Naive thymus-derived CD4-positive, alpha-beta T cell (primary cell): ENCODE measurements at regions of chr2 and their contacts with region 1.

Region 1: GRCh38 chr2:216183462-216183861 is 74.3 kb downstream of the XRCC5 start:
- DNase-seq: no peak
- ATAC-seq: peak; percentile 50
- H3K4me3 ChIP-seq: no peak overlapping the region
- H3K4me3 Mint-ChIP-seq: peak overlapping the region in 3 of 10 donors; percentile 14 to 66 (median 27)
- H3K27ac ChIP-seq: peak overlapping the region; percentile 49
- H3K27ac Mint-ChIP-seq: peak overlapping the region in 8 of 9 donors; percentile 22 to 86 (median 70)
- H3K4me1 ChIP-seq: peaks cover 0 to 6% of the 10 kb centered on the region in 2 donors
- H3K4me1 Mint-ChIP-seq: peaks cover 66 to 93% (median 85%) of the 10 kb centered on the region in 7 donors
- H3K27me3 ChIP-seq: no peaks in the 10 kb centered on the region
- H3K27me3 Mint-ChIP-seq: no peaks in the 10 kb centered on the region

Region 2: DNA sequence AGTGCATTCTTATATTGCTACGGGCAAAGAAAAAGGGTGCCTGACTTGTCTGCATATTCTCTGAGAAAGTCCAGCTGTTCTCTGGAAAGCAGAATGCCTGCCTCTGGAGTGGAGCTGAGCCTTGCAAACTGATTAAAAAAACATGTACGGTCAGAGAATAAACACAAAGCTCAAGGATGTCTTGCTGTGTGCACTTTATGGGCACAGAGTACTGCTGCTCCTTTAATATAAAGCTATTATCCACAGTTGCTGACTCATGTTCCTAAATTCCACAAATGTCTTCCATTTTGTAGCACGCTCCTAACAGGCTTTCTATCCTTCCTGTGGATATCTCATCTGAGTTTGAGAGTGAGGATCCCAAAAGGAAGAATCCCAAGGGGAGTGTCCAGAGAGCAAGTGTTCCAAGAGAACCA is 399.1 kb before region 1 on chr2:
- CTCF ChIA-PET with region 1: no interaction called
- POLR2A ChIA-PET with region 1: no interaction called
- intact Hi-C with region 1: no loop called
- DNase-seq: no peak
- ATAC-seq: no peak
- H3K4me3 ChIP-seq: no peak overlapping the region
- H3K4me3 Mint-ChIP-seq: no peak overlapping the region
- H3K27ac ChIP-seq: no peak overlapping the region
- H3K27ac Mint-ChIP-seq: no peak overlapping the region
- H3K4me1 ChIP-seq: no peaks in the 10 kb centered on the region
- H3K4me1 Mint-ChIP-seq: no peaks in the 10 kb centered on the region
- H3K27me3 ChIP-seq: no peaks in the 10 kb centered on the region
- H3K27me3 Mint-ChIP-seq: peaks cover 0 to 10% (median 5%) of the 10 kb centered on the region in 5 donors

Region 3: DNA sequence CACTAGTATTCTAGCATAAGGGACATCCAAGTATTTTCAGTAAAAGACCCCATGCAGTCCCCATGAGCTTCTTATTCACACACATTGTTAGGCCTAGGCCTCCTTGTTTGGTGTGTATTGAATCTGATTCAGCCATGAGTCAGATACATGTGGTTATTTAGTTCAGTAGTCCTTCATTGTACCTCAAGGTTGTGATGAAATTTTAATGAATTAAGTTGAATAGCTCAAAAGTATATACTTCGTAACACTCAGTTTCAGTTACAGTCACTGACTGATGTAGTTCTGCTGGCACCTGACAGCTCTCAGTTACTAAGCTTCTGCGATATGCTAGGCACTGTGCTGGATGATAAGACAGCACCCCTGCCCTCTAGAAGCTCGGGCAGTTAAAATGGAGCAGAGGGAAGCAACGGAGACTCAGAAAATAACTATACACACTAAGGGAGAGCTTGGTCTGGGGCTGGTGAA is 12.1 kb after region 1 on chr2:
- CTCF ChIA-PET with region 1: no interaction called
- POLR2A ChIA-PET with region 1: no interaction called
- intact Hi-C with region 1: loop called in 1 of 2 experiments (anchors 1 kb)
- DNase-seq: no peak
- ATAC-seq: no peak
- H3K4me3 ChIP-seq: no peak overlapping the region
- H3K4me3 Mint-ChIP-seq: no peak overlapping the region
- H3K27ac ChIP-seq: no peak overlapping the region
- H3K27ac Mint-ChIP-seq: peak overlapping the region in 5 of 9 donors; percentile 21 to 74 (median 68)
- H3K4me1 ChIP-seq: no peaks in the 10 kb centered on the region
- H3K4me1 Mint-ChIP-seq: peaks cover 4 to 37% (median 22%) of the 10 kb centered on the region in 7 donors
- H3K27me3 ChIP-seq: no peaks in the 10 kb centered on the region
- H3K27me3 Mint-ChIP-seq: no peaks in the 10 kb centered on the region

Region 4: DNA sequence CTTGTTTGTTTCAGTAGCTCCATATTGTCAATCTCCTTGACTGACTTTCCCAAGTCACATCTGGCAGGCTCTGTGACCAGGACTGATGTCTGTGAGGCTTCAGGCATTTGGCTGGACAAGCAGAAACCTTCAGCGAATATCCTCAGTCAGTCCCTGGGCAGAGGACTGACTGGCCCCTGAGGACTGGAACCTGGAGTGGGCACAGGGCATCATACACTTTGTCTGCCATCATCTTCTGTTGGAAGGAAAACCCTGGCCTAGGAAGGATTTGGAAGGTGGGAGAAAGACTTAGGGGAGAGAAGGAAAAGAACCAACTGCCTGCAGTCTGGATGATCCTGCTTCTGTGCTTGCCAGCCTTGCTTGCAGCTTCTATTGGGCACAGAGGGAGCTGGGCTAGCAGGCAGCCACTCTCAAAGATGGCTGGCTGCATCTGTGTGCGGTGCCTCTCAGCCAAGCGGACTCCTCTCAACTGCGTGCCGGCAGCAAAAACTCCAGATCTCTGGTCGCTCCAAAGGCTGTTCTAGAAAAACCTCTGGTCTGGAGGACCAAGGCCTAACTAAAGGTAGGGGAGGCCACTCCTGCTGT is 62.0 kb after region 1 on chr2:
- CTCF ChIA-PET with region 1: no interaction called
- POLR2A ChIA-PET with region 1: no interaction called
- intact Hi-C with region 1: no loop called
- DNase-seq: no peak
- ATAC-seq: no peak
- H3K4me3 ChIP-seq: no peak overlapping the region
- H3K4me3 Mint-ChIP-seq: no peak overlapping the region
- H3K27ac ChIP-seq: no peak overlapping the region
- H3K27ac Mint-ChIP-seq: no peak overlapping the region
- H3K4me1 ChIP-seq: no peaks in the 10 kb centered on the region
- H3K4me1 Mint-ChIP-seq: peaks cover 0 to 7% (median 6%) of the 10 kb centered on the region in 7 donors
- H3K27me3 ChIP-seq: no peaks in the 10 kb centered on the region
- H3K27me3 Mint-ChIP-seq: no peaks in the 10 kb centered on the region

Region 5: GRCh38 chr2:216507220-216508160 is 324.0 kb after region 1 on chr2:
- CTCF ChIA-PET with region 1: no interaction called
- POLR2A ChIA-PET with region 1: no interaction called
- intact Hi-C with region 1: no loop called
- DNase-seq: no peak
- ATAC-seq: no peak
- H3K4me3 ChIP-seq: no peak overlapping the region
- H3K4me3 Mint-ChIP-seq: no peak overlapping the region
- H3K27ac ChIP-seq: no peak overlapping the region
- H3K27ac Mint-ChIP-seq: peak overlapping the region in 1 of 9 donors; percentile 57
- H3K4me1 ChIP-seq: no peaks in the 10 kb centered on the region
- H3K4me1 Mint-ChIP-seq: peaks cover 4 to 18% (median 11%) of the 10 kb centered on the region in 7 donors
- H3K27me3 ChIP-seq: no peaks in the 10 kb centered on the region
- H3K27me3 Mint-ChIP-seq: no peaks in the 10 kb centered on the region